Tibial artery (tissue), 4 donors: ENCODE measurements at regions of chr7 and their contacts with region 1.

Region 1: GRCh38 chr7:50142425-50143017 is 49.5 kb upstream of the ZPBP start:
- DNase-seq: no peak
- H3K4me3 ChIP-seq: no peak overlapping the region
- H3K27ac ChIP-seq: no peak overlapping the region
- H3K4me1 ChIP-seq: no peaks in the 10 kb centered on the region
- H3K27me3 ChIP-seq: peaks cover 0 to 9% of the 10 kb centered on the region in 2 donors
- CTCF ChIP-seq: peak; percentile 59 to 66

Region 2: DNA sequence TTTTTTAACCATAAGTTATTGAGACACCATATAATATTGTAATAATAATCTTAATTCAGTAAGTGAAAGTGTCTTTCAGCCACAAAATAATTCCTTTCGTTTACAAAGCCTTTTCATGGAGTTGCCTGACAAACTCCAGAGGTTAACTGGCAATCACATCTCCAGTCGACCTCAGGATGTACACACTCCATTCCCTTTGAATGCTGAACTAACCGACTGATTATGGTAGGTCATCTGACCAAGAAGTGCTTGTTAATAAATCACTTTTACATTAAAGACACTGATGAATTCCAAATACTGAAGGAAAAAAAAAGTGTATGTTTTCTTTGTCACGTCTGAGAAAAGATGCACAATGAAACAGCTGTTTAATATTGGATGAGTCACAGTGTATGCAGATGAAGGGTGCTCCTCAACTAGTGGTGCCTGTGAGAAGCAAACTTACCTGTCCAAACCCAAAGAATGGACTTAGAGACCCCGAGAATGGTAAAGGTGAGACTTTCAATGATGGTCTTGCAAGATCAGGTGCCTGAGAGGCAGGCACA is 717.2 kb before region 1 on chr7:
- intact Hi-C with region 1: no loop called
- DNase-seq: no peak
- H3K4me3 ChIP-seq: no peak overlapping the region
- H3K27ac ChIP-seq: no peak overlapping the region
- H3K4me1 ChIP-seq: no peaks in the 10 kb centered on the region
- H3K27me3 ChIP-seq: no peaks in the 10 kb centered on the region
- CTCF ChIP-seq: no peak

Region 3: GRCh38 chr7:49513911-49514310 is 628.6 kb before region 1 on chr7:
- intact Hi-C with region 1: no loop called
- DNase-seq: no peak
- H3K4me3 ChIP-seq: no peak overlapping the region
- H3K27ac ChIP-seq: no peak overlapping the region
- H3K4me1 ChIP-seq: no peaks in the 10 kb centered on the region
- H3K27me3 ChIP-seq: no peaks in the 10 kb centered on the region
- CTCF ChIP-seq: no peak

Region 4: GRCh38 chr7:50304158-50304910 is 161.8 kb after region 1 on chr7 and contains the start of gene IKZF1:
- intact Hi-C with region 1: no loop called
- DNase-seq: peak; percentile 69 to 75
- H3K4me3 ChIP-seq: peak within 1 kb of the TSS; percentile 40 to 44
- H3K27ac ChIP-seq: no peak within 1 kb of the TSS
- H3K4me1 ChIP-seq: peaks cover 0 to 16% (median 5%) of the 10 kb centered on the region in 4 donors
- H3K27me3 ChIP-seq: peaks cover 0 to 34% of the 10 kb centered on the region in 2 donors
- CTCF ChIP-seq: no peak

Region 5: GRCh38 chr7:51141451-51142003 is 999.0 kb after region 1 on chr7:
- intact Hi-C with region 1: loop called (anchors 10 kb)
- DNase-seq: no peak
- H3K4me3 ChIP-seq: no peak overlapping the region
- H3K27ac ChIP-seq: no peak overlapping the region
- H3K4me1 ChIP-seq: no peaks in the 10 kb centered on the region
- H3K27me3 ChIP-seq: peaks cover 0 to 3% of the 10 kb centered on the region in 2 donors
- CTCF ChIP-seq: peak; percentile 34 to 47